PC-9 (cell line): ENCODE measurements at regions of chr10 and their contacts with region 1.

Region 1: DNA sequence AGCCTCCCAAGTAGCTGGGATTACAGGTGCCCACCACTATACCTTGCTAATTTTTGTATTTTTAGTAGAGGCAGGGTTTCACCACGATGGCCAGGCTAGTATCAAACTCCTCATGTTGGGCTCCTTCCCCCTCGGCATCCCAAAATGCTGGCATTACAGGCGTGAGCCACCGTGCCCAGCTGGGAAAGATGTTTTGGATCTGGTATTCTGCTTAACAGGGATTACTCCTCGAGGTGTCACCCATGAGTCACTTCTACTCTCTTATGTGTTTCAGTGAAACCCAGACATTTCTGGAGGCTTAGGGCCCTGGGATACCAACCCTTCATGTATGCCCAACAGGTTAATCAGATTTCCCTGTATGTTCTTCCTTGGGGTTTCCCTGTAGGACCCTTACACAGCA is 11.8 kb upstream of the OPN4 start:
- DNase-seq: no peak
- H3K4me3 ChIP-seq: no peak overlapping the region
- H3K27ac ChIP-seq: no peak overlapping the region
- H3K4me1 ChIP-seq: peaks cover 16% of the 10 kb centered on the region
- H3K27me3 ChIP-seq: no peaks in the 10 kb centered on the region
- CTCF ChIP-seq: no peak

Region 2: GRCh38 chr10:86139066-86139657 is 503.3 kb before region 1 on chr10:
- CTCF ChIA-PET with region 1: no interaction called
- POLR2A ChIA-PET with region 1: no interaction called
- intact Hi-C with region 1: no loop called
- DNase-seq: peak in 1 of 2 experiments; percentile 7
- H3K4me3 ChIP-seq: no peak overlapping the region
- H3K27ac ChIP-seq: no peak overlapping the region
- H3K4me1 ChIP-seq: no peaks in the 10 kb centered on the region
- H3K27me3 ChIP-seq: peaks cover 7% of the 10 kb centered on the region; the same call in 1 of the 2 replicates
- CTCF ChIP-seq: peak; percentile 55

Region 3: DNA sequence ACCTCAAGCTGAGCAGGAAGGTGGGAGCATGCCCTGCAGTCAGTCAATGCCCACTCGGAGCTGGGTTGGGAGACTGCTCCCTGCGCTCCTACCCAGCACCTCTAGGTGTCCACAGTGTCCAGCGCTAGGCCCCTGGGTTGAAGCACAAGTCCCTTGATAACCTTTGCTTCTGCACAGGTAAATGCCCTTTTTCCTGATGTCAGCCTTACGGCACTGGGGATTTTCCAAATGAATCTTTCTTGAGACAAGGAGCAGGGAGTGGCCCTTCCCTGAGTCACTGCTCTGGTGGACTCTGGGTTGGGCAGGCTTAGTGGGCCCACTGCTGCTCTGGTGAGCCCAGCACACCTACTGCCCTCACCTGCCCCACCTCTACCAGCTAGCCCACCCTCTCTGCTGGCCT is 50.1 kb before region 1 on chr10:
- CTCF ChIA-PET with region 1: interaction called, 10 read pairs
- POLR2A ChIA-PET with region 1: interaction called, 5 read pairs
- intact Hi-C with region 1: no loop called
- DNase-seq: peak; percentile 52 to 78
- H3K4me3 ChIP-seq: no peak overlapping the region
- H3K27ac ChIP-seq: peak overlapping the region; percentile 81
- H3K4me1 ChIP-seq: peaks cover 26% of the 10 kb centered on the region
- H3K27me3 ChIP-seq: no peaks in the 10 kb centered on the region
- CTCF ChIP-seq: peak; percentile 68